ENCODE measurements at regions of chr18 and their contacts with region 1.

Region 1: DNA sequence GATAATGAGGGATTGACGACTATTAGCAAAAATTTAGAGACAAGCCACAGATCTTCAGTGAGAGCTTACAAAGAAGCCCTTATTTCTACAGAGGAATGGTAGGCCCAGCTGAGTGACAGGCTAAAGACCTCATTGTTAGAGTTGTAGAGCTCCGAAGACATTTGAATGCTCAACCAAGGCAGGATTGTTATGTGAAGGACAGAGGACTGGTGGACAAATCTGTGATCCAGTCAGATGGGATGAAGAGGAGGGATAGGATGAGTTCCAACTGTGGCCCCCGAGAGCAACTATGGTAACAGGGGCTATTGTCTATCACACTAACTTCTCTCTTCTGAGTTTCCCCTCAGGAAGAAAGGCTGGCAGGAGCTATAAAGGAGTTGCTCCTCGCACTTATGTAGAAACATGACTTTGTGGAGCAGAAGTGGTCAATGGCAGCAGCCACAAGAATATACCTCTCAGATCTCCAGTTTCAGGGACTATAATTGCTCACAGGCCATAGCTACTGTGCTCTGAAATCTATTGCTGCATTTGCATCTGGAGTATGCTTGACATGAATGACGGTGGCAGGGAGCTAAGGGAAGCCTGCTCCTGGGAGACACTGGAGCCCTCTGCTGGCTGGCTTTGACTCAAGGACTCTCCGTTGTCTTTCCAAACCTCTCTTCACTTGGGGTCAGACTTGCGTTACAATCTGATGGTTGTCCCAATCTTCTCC is 50.3 kb upstream of the GREB1L start:
- DNase-seq: peak in 1 of 2 experiments; percentile 38
- H3K4me3 ChIP-seq: no peak overlapping the region
- H3K27ac ChIP-seq: no peak overlapping the region
- H3K4me1 ChIP-seq: no peaks in the 10 kb centered on the region
- H3K27me3 ChIP-seq: no peaks in the 10 kb centered on the region
- CTCF ChIP-seq: peak; percentile 50

Region 2: DNA sequence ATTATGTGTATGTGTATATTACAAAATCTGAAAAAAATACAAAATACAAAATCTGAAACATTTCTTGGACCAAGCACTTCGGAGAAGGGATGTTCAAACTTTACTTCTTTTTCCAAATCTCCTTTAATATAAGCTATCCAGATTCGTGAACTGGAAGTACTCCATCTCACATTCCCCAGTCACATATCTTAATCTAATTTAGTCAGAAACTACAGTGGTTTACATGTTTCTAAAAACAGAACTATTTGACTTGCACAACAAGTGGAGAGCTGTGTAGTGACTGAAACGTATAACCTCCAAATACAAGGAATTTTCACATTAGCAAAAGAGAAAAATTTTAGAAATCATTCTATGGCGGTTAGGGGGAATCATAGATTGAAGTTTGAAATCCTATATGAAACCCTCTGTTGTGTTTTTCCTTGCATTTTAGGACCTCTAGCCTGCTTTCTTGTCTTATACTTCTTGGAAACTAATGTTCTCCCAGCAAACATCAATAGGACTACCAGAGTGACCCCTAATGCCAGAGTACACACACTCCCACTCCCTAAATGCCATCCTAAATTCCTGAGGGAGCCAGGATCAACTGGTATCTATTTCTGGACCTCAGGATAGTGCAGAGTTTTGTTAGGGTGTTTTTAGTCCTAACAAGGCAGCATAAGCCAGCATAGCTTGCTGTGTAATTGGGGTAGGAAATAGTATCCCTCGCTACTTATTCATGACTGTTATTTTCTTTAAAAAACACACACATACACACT is 49.9 kb before region 1 on chr18:
- CTCF ChIA-PET with region 1: no interaction called
- POLR2A ChIA-PET with region 1: no interaction called
- intact Hi-C with region 1: no loop called
- DNase-seq: no peak
- H3K4me3 ChIP-seq: no peak overlapping the region
- H3K27ac ChIP-seq: no peak overlapping the region
- H3K4me1 ChIP-seq: no peaks in the 10 kb centered on the region
- H3K27me3 ChIP-seq: no peaks in the 10 kb centered on the region
- CTCF ChIP-seq: no peak

Region 3: DNA sequence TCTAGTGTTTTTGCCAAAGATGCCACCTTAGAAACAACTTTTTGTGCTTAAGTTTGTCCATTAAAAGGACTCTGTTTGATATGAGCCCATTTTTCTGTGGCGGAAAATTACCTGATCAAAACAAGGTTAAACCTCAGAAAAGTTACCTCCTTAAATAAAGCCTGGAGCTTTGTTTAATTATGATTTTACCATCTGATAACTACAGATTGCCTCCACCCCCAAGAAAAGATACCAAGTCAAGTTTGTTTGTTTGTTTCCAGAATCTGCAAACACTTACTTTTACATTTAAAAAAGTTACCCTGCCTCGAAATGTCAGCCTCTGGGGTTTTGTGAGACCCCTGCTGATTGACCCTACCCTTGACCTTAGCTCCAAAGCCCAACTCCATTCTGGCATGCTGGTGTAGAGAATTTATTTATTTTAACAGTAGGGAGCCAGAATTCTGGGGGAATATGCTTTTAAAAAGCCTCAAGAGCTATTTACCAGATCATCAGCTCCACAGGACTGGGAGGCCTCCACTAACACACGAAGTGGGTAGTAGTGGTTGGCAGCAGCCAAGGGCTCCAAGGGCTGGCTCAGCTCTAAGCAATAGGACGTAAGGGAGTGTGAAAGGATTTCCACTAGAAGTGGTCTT is 27.0 kb after region 1 on chr18:
- CTCF ChIA-PET with region 1: no interaction called
- POLR2A ChIA-PET with region 1: no interaction called
- intact Hi-C with region 1: no loop called
- DNase-seq: no peak
- H3K4me3 ChIP-seq: no peak overlapping the region
- H3K27ac ChIP-seq: no peak overlapping the region
- H3K4me1 ChIP-seq: no peaks in the 10 kb centered on the region
- H3K27me3 ChIP-seq: no peaks in the 10 kb centered on the region
- CTCF ChIP-seq: no peak

Region 4: DNA sequence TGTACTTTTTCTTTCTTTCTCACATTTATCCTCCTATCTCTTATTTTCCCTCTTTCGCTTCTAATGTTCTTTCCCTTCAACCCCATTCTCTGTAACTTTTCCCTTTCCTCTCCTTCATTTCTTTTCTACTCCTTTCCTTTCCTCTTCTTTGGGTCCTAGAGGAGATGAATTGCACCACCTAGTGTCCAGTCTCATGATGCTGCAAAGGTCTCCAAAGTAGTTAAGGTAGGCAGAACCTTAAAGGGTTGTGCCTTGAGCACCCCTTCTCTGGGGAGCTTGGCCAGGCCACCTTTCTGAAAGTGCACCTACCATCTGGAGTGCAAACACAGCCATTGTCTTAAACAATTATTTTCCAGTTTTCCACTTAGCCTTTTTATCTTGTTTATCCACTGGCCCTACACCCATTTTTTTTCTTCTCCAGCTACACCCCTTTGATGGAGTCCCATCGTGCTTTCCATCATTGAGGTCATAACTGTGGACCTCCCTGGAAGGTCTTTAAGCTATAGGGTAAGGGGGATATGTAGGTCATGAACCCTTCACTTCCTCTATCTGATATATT is 252.8 kb after region 1 on chr18:
- CTCF ChIA-PET with region 1: interaction called, 3 read pairs
- POLR2A ChIA-PET with region 1: no interaction called
- intact Hi-C with region 1: loop called (anchors 1 kb)
- DNase-seq: peak; percentile 9 to 40
- H3K4me3 ChIP-seq: no peak overlapping the region
- H3K27ac ChIP-seq: no peak overlapping the region
- H3K4me1 ChIP-seq: peaks cover 29% of the 10 kb centered on the region
- H3K27me3 ChIP-seq: no peaks in the 10 kb centered on the region
- CTCF ChIP-seq: peak; percentile 75

Region 5: DNA sequence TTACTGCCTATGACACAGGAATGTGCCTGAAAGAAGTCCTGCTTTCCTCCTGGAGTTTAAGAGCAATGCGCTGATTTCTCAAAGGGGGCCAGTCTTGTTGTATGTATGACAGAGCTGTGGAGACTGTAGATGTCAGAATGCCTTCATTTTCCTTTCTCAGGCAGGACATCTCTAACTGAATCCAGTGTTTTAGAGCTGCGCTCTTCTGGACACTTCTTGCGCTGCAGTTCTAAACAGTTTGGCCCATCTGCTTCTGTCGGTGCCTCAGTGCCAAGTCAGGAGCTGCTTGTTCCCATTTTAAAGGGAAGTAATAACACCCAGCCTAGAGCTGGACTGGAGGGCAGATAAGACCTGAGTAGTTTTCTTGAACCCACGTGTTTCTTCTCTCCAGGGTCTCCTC is 317.3 kb after region 1 on chr18:
- CTCF ChIA-PET with region 1: no interaction called
- POLR2A ChIA-PET with region 1: no interaction called
- intact Hi-C with region 1: loop called (anchors 5 kb)
- DNase-seq: no peak
- H3K4me3 ChIP-seq: no peak overlapping the region
- H3K27ac ChIP-seq: no peak overlapping the region
- H3K4me1 ChIP-seq: no peaks in the 10 kb centered on the region
- H3K27me3 ChIP-seq: no peaks in the 10 kb centered on the region
- CTCF ChIP-seq: no peak

Region 6: DNA sequence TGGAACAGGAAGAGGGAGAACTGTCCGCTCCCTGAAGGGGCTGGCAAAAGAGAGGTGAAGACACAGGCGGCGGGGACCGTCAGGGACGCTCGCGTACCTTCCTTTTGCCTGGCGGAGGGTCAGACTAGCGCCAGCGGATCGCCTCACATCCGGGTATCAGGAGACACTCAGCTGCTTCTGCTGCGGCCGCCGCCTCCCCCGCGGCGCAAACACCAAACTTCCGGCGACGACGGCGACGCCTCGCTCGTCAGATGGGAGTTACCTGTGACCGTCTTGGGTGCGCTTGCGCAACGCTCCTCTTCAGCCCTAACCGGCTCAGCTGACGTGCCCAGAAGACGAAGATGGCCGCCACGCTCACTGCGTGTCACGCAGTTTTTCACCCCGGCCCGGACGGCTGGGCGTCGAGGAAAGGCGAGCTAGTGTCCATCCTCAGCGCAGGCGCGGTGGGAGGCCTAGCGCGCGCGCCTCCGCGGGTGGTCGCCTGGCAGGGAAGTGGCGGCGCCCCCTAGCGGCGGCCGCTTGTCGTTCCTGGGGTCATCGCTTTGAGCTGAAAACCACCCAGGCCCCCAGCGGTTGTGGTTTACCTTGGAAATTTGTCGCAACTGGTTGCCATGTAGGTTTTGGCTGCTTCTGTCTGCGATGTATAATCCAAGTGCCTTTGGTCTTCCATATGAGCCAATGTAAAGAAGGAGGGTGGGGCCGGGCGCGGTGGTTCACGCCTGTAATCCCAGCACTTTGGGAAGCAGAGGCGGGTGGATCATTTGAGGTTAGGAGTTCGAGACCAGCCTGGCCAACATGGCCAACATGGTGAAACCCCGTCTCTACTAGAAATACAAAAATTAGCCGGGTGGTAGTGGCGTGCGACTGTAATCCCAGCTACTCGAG is 409.0 kb after region 1 on chr18 and contains the start of gene ESCO1:
- CTCF ChIA-PET with region 1: no interaction called
- POLR2A ChIA-PET with region 1: no interaction called
- intact Hi-C with region 1: loop called (anchors 10 kb)
- DNase-seq: peak; percentile 88 to 92
- H3K4me3 ChIP-seq: peak within 1 kb of the TSS; percentile 85
- H3K27ac ChIP-seq: peak within 1 kb of the TSS; percentile 94
- H3K4me1 ChIP-seq: peaks cover 8% of the 10 kb centered on the region
- H3K27me3 ChIP-seq: no peaks in the 10 kb centered on the region
- CTCF ChIP-seq: peak; percentile 75
- total RNA-seq, gene ESCO1: 10.8 and 11.3 TPM in 2 replicates